CD4-positive, alpha-beta memory T cell (primary cell): ENCODE measurements at regions of chr1 and their contacts with region 1.

Region 1: GRCh38 chr1:192545896-192546521 is 29.6 kb upstream of the RGS1 start:
- DNase-seq: no peak
- H3K4me3 ChIP-seq: no peak overlapping the region
- H3K4me3 Mint-ChIP-seq: peak overlapping the region in 4 of 8 donors; percentile 26 to 61 (median 53)
- H3K27ac ChIP-seq: no peak overlapping the region
- H3K27ac Mint-ChIP-seq: peak overlapping the region in 4 of 7 donors; percentile 39 to 81 (median 73)
- H3K4me1 ChIP-seq: peaks cover 63% of the 10 kb centered on the region
- H3K4me1 Mint-ChIP-seq: peaks cover 32 to 67% (median 50%) of the 10 kb centered on the region in 4 donors
- H3K27me3 ChIP-seq: no peaks in the 10 kb centered on the region
- H3K27me3 Mint-ChIP-seq: no peaks in the 10 kb centered on the region

Region 2: DNA sequence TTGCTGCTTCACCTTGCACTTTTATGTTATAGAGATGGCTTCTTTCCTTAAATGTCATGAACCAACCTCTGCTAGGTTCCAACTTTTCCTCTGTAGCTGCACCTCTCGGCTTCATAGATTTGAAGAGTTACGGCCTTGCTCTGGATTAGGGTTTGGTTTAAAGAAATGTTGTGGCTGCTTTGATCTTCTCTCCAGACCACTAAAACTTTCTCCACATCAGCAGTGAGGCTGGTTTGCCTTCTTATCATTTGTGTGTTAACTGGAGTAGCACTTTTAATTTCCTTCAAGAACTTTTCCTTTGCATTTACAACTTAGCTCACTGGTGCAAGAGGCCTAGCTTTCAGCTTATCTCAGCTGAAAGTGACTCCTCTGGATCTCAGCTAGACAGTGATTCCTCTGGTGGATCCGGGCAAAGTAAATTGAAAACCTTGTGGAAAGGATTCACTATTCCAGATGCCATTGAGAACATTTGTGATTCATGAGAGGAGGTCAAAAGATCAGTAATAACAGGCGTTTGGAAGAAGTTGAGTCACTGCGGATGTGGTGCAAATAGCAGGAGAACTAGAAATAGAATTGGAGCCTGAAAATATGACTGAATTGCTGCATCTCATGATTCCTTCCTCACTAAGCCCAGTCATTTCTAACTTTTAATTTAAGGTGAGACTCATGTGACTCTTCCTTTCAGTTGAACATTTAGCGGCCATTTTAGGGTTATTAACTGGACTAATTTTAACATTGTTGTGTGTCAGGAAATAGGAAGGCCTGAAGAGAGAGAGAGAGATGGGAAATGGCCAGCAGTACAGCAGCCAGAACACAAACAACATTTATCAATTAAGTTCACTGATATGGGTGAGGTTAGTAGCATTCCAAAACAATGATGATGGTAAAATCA is 13.4 kb after region 1 on chr1:
- CTCF ChIA-PET with region 1: interaction called, 3 read pairs
- POLR2A ChIA-PET with region 1: interaction called, 6 read pairs
- intact Hi-C with region 1: loop called (anchors 1 kb)
- DNase-seq: no peak
- H3K4me3 ChIP-seq: no peak overlapping the region
- H3K4me3 Mint-ChIP-seq: peak overlapping the region in 4 of 8 donors; percentile 32 to 66 (median 44)
- H3K27ac ChIP-seq: no peak overlapping the region
- H3K27ac Mint-ChIP-seq: peak overlapping the region; percentile 57 to 82 (median 76)
- H3K4me1 ChIP-seq: peaks cover 18% of the 10 kb centered on the region
- H3K4me1 Mint-ChIP-seq: peaks cover 9 to 25% (median 18%) of the 10 kb centered on the region in 4 donors
- H3K27me3 ChIP-seq: no peaks in the 10 kb centered on the region
- H3K27me3 Mint-ChIP-seq: no peaks in the 10 kb centered on the region